ENCODE measurements at regions of chr12 and their contacts with region 1.

Region 1: GRCh38 chr12:76031537-76032073 is at the start of gene PHLDA1:
- DNase-seq: peak; percentile 96
- H3K4me3 Mint-ChIP-seq: peak within 1 kb of the TSS; percentile 90
- H3K27ac Mint-ChIP-seq: peak within 1 kb of the TSS; percentile 91
- H3K4me1 Mint-ChIP-seq: peaks cover 29% of the 10 kb centered on the region
- H3K27me3 Mint-ChIP-seq: peaks cover 2% of the 10 kb centered on the region
- total RNA-seq, gene PHLDA1: 2.7 to 2.8 TPM

Region 2: DNA sequence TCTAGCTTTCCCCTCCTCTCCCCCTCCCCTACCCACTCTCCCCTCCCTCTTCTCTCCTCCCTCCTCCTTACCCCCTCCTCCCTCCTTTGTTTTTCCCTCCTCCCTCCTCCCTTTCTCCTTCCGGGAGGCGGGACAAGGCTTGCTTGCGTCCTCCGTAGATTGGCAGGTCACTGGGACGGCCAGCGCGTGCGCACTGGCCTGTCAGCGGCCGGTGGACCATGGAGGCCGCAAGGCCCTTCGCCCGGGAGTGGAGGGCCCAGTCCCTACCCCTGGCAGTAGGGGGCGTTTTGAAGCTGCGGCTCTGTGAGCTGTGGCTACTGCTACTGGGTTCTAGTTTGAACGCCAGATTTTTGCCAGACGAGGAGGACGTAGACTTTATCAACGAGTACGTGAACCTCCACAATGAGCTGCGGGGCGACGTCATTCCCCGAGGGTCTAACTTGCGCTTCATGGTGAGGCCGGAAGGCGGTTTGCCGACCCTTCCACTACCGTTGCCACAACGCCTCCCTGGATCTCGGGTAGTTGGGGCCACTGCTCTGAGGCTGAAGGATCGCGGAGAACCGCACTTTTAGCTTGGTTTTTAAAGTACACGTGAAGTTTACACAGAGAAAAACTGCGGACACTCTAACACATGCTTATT is 640.6 kb before region 1 on chr12 and contains the start of gene GLIPR1L2:
- CTCF ChIA-PET with region 1: no interaction called
- intact Hi-C with region 1: loop called (anchors 2 kb)
- DNase-seq: peak; percentile 93
- H3K4me3 Mint-ChIP-seq: peak within 1 kb of the TSS; percentile 87
- H3K27ac Mint-ChIP-seq: peak within 1 kb of the TSS; percentile 89
- H3K4me1 Mint-ChIP-seq: peaks cover 27% of the 10 kb centered on the region
- H3K27me3 Mint-ChIP-seq: no peaks in the 10 kb centered on the region
- total RNA-seq, gene GLIPR1L2: 0.33 to 0.35 TPM

Region 3: DNA sequence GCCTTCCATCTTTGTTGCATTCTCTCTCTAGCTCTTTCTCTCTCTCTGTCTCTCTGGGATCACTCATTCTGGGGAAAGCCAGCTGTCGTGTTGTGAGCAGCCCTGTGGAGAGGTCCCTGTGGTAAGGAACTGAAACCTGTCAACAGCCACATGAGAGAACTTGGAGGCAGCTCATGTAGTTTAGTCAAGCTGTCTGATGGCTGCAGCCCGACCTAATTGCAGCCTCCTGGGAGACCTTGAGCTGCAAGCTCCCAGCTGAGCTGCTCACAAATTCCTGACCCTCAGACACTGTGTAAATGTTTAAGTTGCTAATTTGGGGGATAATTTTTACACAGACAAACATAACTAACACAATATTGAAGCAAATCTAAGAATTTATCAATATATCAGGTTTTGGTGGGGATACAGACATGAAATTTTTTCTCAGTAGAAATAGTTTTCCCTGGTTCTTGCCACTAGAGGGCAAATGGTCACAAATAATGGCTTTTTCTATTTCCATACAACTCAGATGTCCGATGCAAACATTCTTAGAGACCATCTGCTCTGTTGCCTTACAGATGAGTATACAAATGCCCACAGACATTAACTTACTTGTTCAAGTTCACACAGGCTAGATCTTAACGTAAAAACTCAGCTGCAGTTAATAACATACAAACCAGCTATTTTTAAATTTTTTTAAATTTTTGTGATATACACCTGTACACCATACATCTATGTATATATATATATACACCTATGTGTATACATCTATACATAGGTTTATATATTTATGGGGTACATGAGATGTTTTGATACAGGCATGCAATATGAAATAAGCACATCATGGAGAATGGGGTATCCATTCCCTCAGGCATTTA is 504.7 kb before region 1 on chr12:
- CTCF ChIA-PET with region 1: interaction called, 35 read pairs
- intact Hi-C with region 1: loop called (anchors 1 kb)
- DNase-seq: no peak
- H3K4me3 Mint-ChIP-seq: no peak overlapping the region
- H3K27ac Mint-ChIP-seq: no peak overlapping the region
- H3K4me1 Mint-ChIP-seq: peaks cover 3% of the 10 kb centered on the region
- H3K27me3 Mint-ChIP-seq: peaks cover 27% of the 10 kb centered on the region

Region 4: GRCh38 chr12:75738486-75738885 is 293.1 kb before region 1 on chr12:
- CTCF ChIA-PET with region 1: interaction called, 3 read pairs
- intact Hi-C with region 1: loop called (anchors 1 kb)
- DNase-seq: peak; percentile 37
- H3K4me3 Mint-ChIP-seq: no peak overlapping the region
- H3K27ac Mint-ChIP-seq: no peak overlapping the region
- H3K4me1 Mint-ChIP-seq: peaks cover 16% of the 10 kb centered on the region
- H3K27me3 Mint-ChIP-seq: peaks cover 7% of the 10 kb centered on the region

Region 5: DNA sequence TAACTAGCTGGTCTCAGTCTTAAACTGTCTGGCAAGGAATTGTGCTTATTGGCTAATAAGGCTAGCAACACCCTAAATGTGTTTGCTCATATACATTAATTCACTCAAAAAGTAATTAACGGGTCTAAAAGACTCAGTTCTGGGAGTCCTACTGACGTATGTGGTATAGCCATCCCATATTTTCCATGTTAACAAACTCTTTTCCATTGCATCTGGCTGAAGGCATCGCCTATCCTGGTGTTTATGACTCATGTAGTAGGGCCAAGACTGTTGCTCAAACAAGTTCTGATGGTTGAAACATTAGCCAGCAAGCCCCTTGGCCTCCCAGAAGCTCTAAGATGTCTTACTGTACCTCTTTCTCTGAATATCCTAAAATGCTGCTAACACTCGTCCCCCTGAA is 98.5 kb before region 1 on chr12:
- CTCF ChIA-PET with region 1: interaction called, 16 read pairs
- intact Hi-C with region 1: loop called (anchors 2 kb)
- DNase-seq: no peak
- H3K4me3 Mint-ChIP-seq: no peak overlapping the region
- H3K27ac Mint-ChIP-seq: no peak overlapping the region
- H3K4me1 Mint-ChIP-seq: peaks cover 18% of the 10 kb centered on the region
- H3K27me3 Mint-ChIP-seq: peaks cover 15% of the 10 kb centered on the region

Region 6: GRCh38 chr12:76020731-76021672 is 10.6 kb before region 1 on chr12:
- CTCF ChIA-PET with region 1: interaction called, 11 read pairs
- intact Hi-C with region 1: loop called (anchors 1 kb)
- DNase-seq: peak; percentile 91
- H3K4me3 Mint-ChIP-seq: peak overlapping the region; percentile 40
- H3K27ac Mint-ChIP-seq: peak overlapping the region; percentile 95
- H3K4me1 Mint-ChIP-seq: peaks cover 45% of the 10 kb centered on the region
- H3K27me3 Mint-ChIP-seq: no peaks in the 10 kb centered on the region

Region 7: GRCh38 chr12:76559400-76560085 is 527.9 kb after region 1 on chr12 and contains the start of gene OSBPL8:
- CTCF ChIA-PET with region 1: no interaction called
- intact Hi-C with region 1: loop called (anchors 2 kb)
- DNase-seq: peak; percentile 96
- H3K4me3 Mint-ChIP-seq: peak within 1 kb of the TSS; percentile 92
- H3K27ac Mint-ChIP-seq: peak within 1 kb of the TSS; percentile 96
- H3K4me1 Mint-ChIP-seq: peaks cover 34% of the 10 kb centered on the region
- H3K27me3 Mint-ChIP-seq: no peaks in the 10 kb centered on the region
- total RNA-seq, gene OSBPL8: 56.8 to 63.7 TPM

Region 8: DNA sequence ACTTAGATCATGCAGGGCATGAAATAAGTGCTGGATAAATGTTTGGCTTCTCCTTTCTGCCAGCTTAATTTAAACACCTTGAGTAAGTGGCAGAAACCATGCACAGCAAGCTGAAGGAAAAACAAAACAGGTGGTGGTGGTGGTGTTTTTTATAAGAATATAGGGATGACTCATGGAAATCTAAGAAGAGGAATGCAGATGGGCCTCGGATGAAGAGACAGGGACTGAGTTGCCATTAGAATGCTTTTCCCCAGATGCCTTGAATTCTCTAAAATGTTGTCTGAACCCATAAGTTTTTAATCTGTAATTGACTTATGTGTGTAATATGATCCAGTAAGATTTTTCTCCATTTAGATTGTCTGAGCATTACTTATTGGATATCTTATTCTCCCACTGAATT is 639.2 kb after region 1 on chr12:
- CTCF ChIA-PET with region 1: no interaction called
- intact Hi-C with region 1: no loop called
- DNase-seq: no peak
- H3K4me3 Mint-ChIP-seq: no peak overlapping the region
- H3K27ac Mint-ChIP-seq: no peak overlapping the region
- H3K4me1 Mint-ChIP-seq: peaks cover 8% of the 10 kb centered on the region
- H3K27me3 Mint-ChIP-seq: no peaks in the 10 kb centered on the region